Activated CD4-positive, alpha-beta T cell treated with anti-CD3 and anti-CD28 coated beads, Interleukin-2, amount 10 ng/mL, durations not matched to agents 24 days and 14 days (primary cell): ENCODE measurements at regions of chr20 and their contacts with region 1.

Region 1: GRCh38 chr20:17682103-17682888 is at the start of gene RRBP1:
- DNase-seq: peak; percentile 99
- H3K4me3 Mint-ChIP-seq: peak within 1 kb of the TSS; percentile 90
- H3K27ac Mint-ChIP-seq: peak within 1 kb of the TSS; percentile 92
- H3K4me1 Mint-ChIP-seq: peaks cover 19% of the 10 kb centered on the region
- H3K27me3 Mint-ChIP-seq: peaks cover 39% of the 10 kb centered on the region
- total RNA-seq, gene RRBP1: 47.5 and 49.9 TPM in 2 replicates

Region 2: GRCh38 chr20:17504898-17505635 is 177.2 kb before region 1 on chr20:
- intact Hi-C with region 1: loop called (anchors 1 kb)
- DNase-seq: peak; percentile 90
- H3K4me3 Mint-ChIP-seq: peak overlapping the region; percentile 88
- H3K27ac Mint-ChIP-seq: peak overlapping the region; percentile 92
- H3K4me1 Mint-ChIP-seq: peaks cover 47% of the 10 kb centered on the region
- H3K27me3 Mint-ChIP-seq: peaks cover 4% of the 10 kb centered on the region

Region 3: GRCh38 chr20:17662333-17663039 is 19.8 kb before region 1 on chr20:
- intact Hi-C with region 1: loop called (anchors 2 kb)
- DNase-seq: no peak
- H3K4me3 Mint-ChIP-seq: peak overlapping the region; percentile 28
- H3K27ac Mint-ChIP-seq: peak overlapping the region; percentile 73
- H3K4me1 Mint-ChIP-seq: peaks cover 49% of the 10 kb centered on the region
- H3K27me3 Mint-ChIP-seq: no peaks in the 10 kb centered on the region

Region 4: GRCh38 chr20:17968366-17969279 is 286.3 kb after region 1 on chr20 and contains the starts of genes MGME1 and SNX5:
- intact Hi-C with region 1: loop called (anchors 1 kb)
- DNase-seq: peak; percentile 100
- H3K4me3 Mint-ChIP-seq: peak within 1 kb of the TSS; percentile 96
- H3K27ac Mint-ChIP-seq: peak within 1 kb of the TSS; percentile 99
- H3K4me1 Mint-ChIP-seq: peaks cover 51% of the 10 kb centered on the region
- H3K27me3 Mint-ChIP-seq: no peaks in the 10 kb centered on the region
- total RNA-seq, gene MGME1: 32.7 and 34.3 TPM in 2 replicates
- total RNA-seq, gene SNX5: 230 and 240 TPM in 2 replicates

Region 5: GRCh38 chr20:18287915-18288748 is 605.8 kb after region 1 on chr20 and contains the start of gene ZNF133:
- intact Hi-C with region 1: loop called (anchors 5 kb)
- DNase-seq: peak; percentile 99
- H3K4me3 Mint-ChIP-seq: peak within 1 kb of the TSS; percentile 99
- H3K27ac Mint-ChIP-seq: peak within 1 kb of the TSS; percentile 99
- H3K4me1 Mint-ChIP-seq: peaks cover 22% of the 10 kb centered on the region
- H3K27me3 Mint-ChIP-seq: peaks cover 17% of the 10 kb centered on the region
- total RNA-seq, gene ZNF133: 10.2 and 10.5 TPM in 2 replicates